ENCODE measurements at regions of chr10 and their contacts with region 1.

Region 1: DNA sequence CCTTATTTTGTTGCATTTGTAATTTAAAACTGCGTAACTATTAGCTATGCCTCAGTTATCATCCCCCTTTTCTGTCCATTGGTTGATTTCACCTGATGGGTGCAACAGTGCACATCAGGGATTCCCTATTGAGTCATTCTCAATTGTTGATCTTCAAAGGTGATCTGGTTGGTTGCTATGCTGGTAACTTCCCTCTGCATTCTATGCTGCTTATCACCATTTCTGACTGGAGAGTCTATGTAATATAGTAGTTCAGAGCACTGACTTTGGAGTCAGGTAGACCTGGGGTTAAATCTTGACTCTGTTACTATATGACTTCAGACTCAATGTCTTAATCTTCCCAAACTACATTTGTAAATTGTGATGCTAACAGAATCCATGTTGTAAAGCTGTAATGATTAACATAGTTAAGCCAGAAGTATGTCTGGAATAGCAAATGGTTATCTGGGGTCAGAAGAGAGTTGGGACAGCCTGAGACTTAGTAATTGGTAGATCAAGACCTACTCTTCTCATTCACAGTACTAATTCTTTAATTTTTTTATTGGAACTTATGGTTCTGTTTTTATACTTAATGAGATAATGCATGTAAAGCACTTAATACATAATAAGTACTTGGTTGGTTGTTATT is 38.1 kb downstream of the EXOC6 start:
- DNase-seq: no peak
- H3K4me3 ChIP-seq: no peak overlapping the region
- H3K27ac ChIP-seq: no peak overlapping the region
- H3K27me3 ChIP-seq: no peaks in the 10 kb centered on the region
- CTCF ChIP-seq: no peak

Region 2: GRCh38 chr10:92923416-92923815 is 37.0 kb after region 1 on chr10:
- CTCF ChIA-PET with region 1: no interaction called
- POLR2A ChIA-PET with region 1: no interaction called
- DNase-seq: no peak
- H3K4me3 ChIP-seq: no peak overlapping the region
- H3K27ac ChIP-seq: no peak overlapping the region
- H3K27me3 ChIP-seq: no peaks in the 10 kb centered on the region
- CTCF ChIP-seq: no peak

Region 3: DNA sequence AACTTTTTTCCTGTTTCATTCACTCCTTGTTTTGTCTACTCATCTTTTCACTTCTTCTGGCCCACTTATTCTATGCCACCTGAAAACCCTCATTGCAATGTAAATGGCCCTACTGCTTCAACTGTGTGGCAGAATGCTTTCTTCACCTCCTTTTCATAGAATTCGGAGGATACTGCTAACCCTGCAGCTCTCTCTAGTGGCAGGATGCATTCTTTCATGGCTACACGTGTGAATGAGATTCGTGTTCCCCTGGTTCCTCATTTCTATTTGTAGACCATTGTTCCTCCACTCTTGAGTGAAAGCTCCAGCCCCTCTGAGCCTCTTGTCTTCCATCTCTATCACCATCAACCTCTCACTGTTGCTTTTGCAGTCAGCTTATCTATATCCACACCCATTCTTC is 153.3 kb after region 1 on chr10:
- CTCF ChIA-PET with region 1: interaction called, 22 read pairs
- POLR2A ChIA-PET with region 1: no interaction called
- DNase-seq: no peak
- H3K4me3 ChIP-seq: no peak overlapping the region
- H3K27ac ChIP-seq: no peak overlapping the region
- H3K27me3 ChIP-seq: no peaks in the 10 kb centered on the region
- CTCF ChIP-seq: peak; percentile 70

Region 4: GRCh38 chr10:93288654-93289634 is 402.5 kb after region 1 on chr10:
- CTCF ChIA-PET with region 1: interaction called, 10 read pairs
- POLR2A ChIA-PET with region 1: no interaction called
- DNase-seq: peak; percentile 66
- H3K4me3 ChIP-seq: no peak overlapping the region
- H3K27ac ChIP-seq: peak overlapping the region; percentile 65
- H3K27me3 ChIP-seq: no peaks in the 10 kb centered on the region
- CTCF ChIP-seq: peak; percentile 81

Region 5: DNA sequence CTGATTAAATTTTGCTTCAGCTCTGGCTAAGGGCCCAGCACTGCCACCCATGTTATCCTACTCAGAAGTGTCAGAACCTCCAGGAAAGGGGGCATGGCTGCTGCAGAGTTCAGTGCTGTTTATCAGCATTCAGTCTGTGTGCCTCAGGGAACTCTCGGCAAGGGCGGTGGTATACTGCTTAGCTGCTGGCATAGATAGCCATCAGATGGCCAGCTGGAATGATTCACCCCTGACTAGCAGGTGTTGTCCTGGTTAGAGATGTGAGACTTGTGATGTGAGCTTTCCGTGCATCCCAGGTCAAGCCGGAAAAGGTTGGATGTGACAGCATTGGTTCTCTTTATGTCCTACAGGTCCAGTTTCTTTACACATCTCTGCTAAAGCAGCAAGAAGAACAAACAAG is 632.1 kb after region 1 on chr10:
- CTCF ChIA-PET with region 1: no interaction called
- POLR2A ChIA-PET with region 1: no interaction called
- DNase-seq: no peak
- H3K4me3 ChIP-seq: no peak overlapping the region
- H3K27ac ChIP-seq: no peak overlapping the region
- H3K27me3 ChIP-seq: no peaks in the 10 kb centered on the region
- CTCF ChIP-seq: no peak

Measured in AG04450 (cell line).